ENCODE measurements at regions of chr3 and their contacts with region 1.

Region 1: DNA sequence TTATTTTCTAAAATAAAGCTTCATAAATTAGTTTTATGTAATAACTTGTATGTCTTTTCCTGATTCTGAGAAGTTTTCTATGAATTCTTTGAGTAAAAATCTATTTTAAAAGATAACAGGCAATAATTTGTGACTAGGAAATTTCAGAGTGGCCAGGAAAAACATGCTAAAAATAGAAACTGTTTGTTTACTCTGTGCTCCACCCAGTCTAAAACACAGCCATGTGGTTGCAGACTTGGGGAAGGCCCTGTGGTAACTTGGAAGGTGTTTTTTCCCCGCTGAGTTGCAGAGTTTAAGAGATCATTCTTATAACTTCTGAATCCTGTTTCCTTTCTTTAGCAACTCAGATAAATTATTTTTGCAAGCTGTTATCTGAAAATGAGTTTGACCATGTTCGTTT is 21.9 kb downstream of the PLCL2 start:
- DNase-seq: peak in 1 of 9 donors; percentile 50
- ATAC-seq: peak; percentile 77
- H3K4me3 ChIP-seq: no peak overlapping the region
- H3K4me3 Mint-ChIP-seq: peak overlapping the region; percentile 22 to 68 (median 51)
- H3K27ac ChIP-seq: no peak overlapping the region
- H3K27ac Mint-ChIP-seq: peak overlapping the region in 7 of 9 donors; percentile 26 to 76 (median 59)
- H3K4me1 ChIP-seq: peaks cover 64% of the 10 kb centered on the region in 2 donors
- H3K4me1 Mint-ChIP-seq: peaks cover 65 to 93% (median 85%) of the 10 kb centered on the region in 7 donors
- H3K27me3 ChIP-seq: no peaks in the 10 kb centered on the region
- H3K27me3 Mint-ChIP-seq: no peaks in the 10 kb centered on the region

Region 2: DNA sequence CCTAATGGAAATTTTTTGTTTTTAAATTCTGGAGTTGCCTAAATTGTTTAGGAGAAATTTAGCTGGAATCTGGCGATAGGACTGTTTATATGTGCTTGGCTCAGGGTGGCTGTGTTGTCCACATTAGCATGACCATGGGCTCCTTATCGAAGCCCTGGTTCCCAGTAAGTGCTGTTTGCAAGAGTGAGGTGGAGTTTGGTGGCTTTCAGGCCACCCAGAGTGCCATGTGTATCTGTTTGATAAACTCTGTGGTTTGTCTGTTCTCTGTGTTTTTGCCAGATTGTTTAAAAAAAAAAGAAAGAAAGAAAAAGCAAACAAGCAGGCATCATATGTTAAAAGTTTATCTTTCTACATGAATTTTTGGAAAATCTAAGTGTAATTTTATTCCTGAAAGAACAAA is 29.6 kb after region 1 on chr3:
- CTCF ChIA-PET with region 1: interaction called, 3 read pairs
- POLR2A ChIA-PET with region 1: interaction called, 4 read pairs
- intact Hi-C with region 1: loop called in 1 of 2 experiments (anchors 5 kb)
- DNase-seq: peak in 7 of 9 donors; percentile 29 to 65 (median 45)
- ATAC-seq: peak; percentile 74
- H3K4me3 ChIP-seq: peak overlapping the region; percentile 5
- H3K4me3 Mint-ChIP-seq: peak overlapping the region; percentile 27 to 77 (median 72)
- H3K27ac ChIP-seq: no peak overlapping the region
- H3K27ac Mint-ChIP-seq: peak overlapping the region in 7 of 9 donors; percentile 29 to 87 (median 61)
- H3K4me1 ChIP-seq: peaks cover 35 to 68% of the 10 kb centered on the region in 2 donors
- H3K4me1 Mint-ChIP-seq: peaks cover 61 to 100% (median 98%) of the 10 kb centered on the region in 7 donors
- H3K27me3 ChIP-seq: no peaks in the 10 kb centered on the region
- H3K27me3 Mint-ChIP-seq: no peaks in the 10 kb centered on the region

Region 3: GRCh38 chr3:16987141-16987540 is 80.5 kb after region 1 on chr3:
- CTCF ChIA-PET with region 1: interaction called, 3 read pairs
- POLR2A ChIA-PET with region 1: no interaction called
- intact Hi-C with region 1: loop called in 1 of 2 experiments (anchors 5 kb)
- DNase-seq: no peak
- ATAC-seq: no peak
- H3K4me3 ChIP-seq: no peak overlapping the region
- H3K4me3 Mint-ChIP-seq: peak overlapping the region in 2 of 10 donors; percentile 12 to 27
- H3K27ac ChIP-seq: no peak overlapping the region
- H3K27ac Mint-ChIP-seq: peak overlapping the region in 2 of 9 donors; percentile 38 to 70
- H3K4me1 ChIP-seq: peaks cover 15 to 19% of the 10 kb centered on the region in 2 donors
- H3K4me1 Mint-ChIP-seq: peaks cover 5 to 95% (median 83%) of the 10 kb centered on the region in 7 donors
- H3K27me3 ChIP-seq: no peaks in the 10 kb centered on the region
- H3K27me3 Mint-ChIP-seq: no peaks in the 10 kb centered on the region

Region 4: DNA sequence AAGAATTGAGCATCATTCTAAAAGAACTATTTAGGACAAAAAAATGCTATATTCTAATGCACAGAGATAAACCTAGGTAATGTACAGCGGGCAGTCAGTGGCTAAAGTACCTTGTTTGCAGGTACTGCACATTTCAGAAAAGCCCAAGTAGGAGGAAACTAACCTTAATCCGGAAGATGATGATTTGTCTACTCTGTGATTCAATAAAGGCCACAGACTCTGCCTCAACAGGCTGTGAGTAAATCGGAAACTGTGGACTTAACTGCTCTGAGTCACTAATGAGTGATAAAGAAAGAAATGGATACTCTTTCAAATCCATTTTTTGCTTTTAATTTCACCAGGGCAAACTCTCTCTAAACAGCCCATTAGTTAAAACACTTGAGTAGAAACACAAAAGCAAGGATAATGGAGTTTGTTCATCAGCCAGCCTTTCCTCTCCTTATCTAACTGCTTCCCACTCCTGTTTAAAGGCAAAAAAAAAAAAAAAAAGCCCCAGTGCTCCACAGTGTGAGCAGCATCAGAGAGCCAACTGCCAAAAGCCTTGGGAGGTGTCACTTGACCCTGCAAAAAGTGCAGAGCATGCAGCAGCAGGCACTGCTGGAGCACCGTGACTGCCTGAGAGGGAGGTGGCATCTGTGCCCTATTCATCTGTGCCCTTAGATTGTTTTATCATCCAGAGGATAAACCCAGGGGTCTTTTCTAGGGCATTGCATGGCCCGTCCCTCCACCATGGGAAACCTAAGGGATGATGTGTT is 1330.7 kb after region 1 on chr3:
- CTCF ChIA-PET with region 1: interaction called, 10 read pairs
- POLR2A ChIA-PET with region 1: no interaction called
- intact Hi-C with region 1: no loop called
- DNase-seq: no peak
- ATAC-seq: no peak
- H3K4me3 ChIP-seq: no peak overlapping the region
- H3K4me3 Mint-ChIP-seq: no peak overlapping the region
- H3K27ac ChIP-seq: no peak overlapping the region
- H3K27ac Mint-ChIP-seq: no peak overlapping the region
- H3K4me1 ChIP-seq: no peaks in the 10 kb centered on the region
- H3K4me1 Mint-ChIP-seq: peaks cover 0 to 1% (median 0%) of the 10 kb centered on the region in 7 donors
- H3K27me3 ChIP-seq: no peaks in the 10 kb centered on the region
- H3K27me3 Mint-ChIP-seq: peaks cover 8 to 26% (median 17%) of the 10 kb centered on the region in 5 donors